ENCODE measurements at regions of chr9 and their contacts with region 1.

Region 1: GRCh38 chr9:69645488-69645887 is 26.7 kb downstream of the APBA1 start:
- DNase-seq: no peak
- H3K4me3 ChIP-seq: no peak overlapping the region
- H3K27ac ChIP-seq: no peak overlapping the region
- H3K4me1 ChIP-seq: no peaks in the 10 kb centered on the region
- H3K27me3 ChIP-seq: peaks cover 13% of the 10 kb centered on the region
- CTCF ChIP-seq: no peak

Region 2: GRCh38 chr9:69657269-69657668 is 11.8 kb after region 1 on chr9:
- CTCF ChIA-PET with region 1: no interaction called
- POLR2A ChIA-PET with region 1: no interaction called
- intact Hi-C with region 1: loop called (anchors 1 kb)
- DNase-seq: no peak
- H3K4me3 ChIP-seq: no peak overlapping the region
- H3K27ac ChIP-seq: no peak overlapping the region
- H3K4me1 ChIP-seq: no peaks in the 10 kb centered on the region
- H3K27me3 ChIP-seq: peaks cover 6% of the 10 kb centered on the region
- CTCF ChIP-seq: no peak

Region 3: GRCh38 chr9:69667306-69667705 is 21.8 kb after region 1 on chr9:
- CTCF ChIA-PET with region 1: no interaction called
- POLR2A ChIA-PET with region 1: no interaction called
- intact Hi-C with region 1: loop called (anchors 2 kb)
- DNase-seq: no peak
- H3K4me3 ChIP-seq: no peak overlapping the region
- H3K27ac ChIP-seq: no peak overlapping the region
- H3K4me1 ChIP-seq: no peaks in the 10 kb centered on the region
- H3K27me3 ChIP-seq: peaks cover 80% of the 10 kb centered on the region
- CTCF ChIP-seq: no peak

Region 4: GRCh38 chr9:69805962-69806515 is 160.6 kb after region 1 on chr9:
- CTCF ChIA-PET with region 1: no interaction called
- POLR2A ChIA-PET with region 1: no interaction called
- intact Hi-C with region 1: no loop called
- DNase-seq: no peak
- H3K4me3 ChIP-seq: no peak overlapping the region
- H3K27ac ChIP-seq: no peak overlapping the region
- H3K4me1 ChIP-seq: peaks cover 12% of the 10 kb centered on the region
- H3K27me3 ChIP-seq: no peaks in the 10 kb centered on the region
- CTCF ChIP-seq: no peak